Body of pancreas (tissue), 4 donors: ENCODE measurements at regions of chrX and their contacts with region 1.

Region 1: GRCh38 chrX:120090208-120090607 is 12.7 kb upstream of the RHOXF2B start:
- DNase-seq: no peak
- ATAC-seq: no peak
- H3K4me3 ChIP-seq: no peak overlapping the region
- H3K27ac ChIP-seq: no peak overlapping the region
- H3K4me1 ChIP-seq: no peaks in the 10 kb centered on the region
- H3K27me3 ChIP-seq: no peaks in the 10 kb centered on the region
- CTCF ChIP-seq: no peak
- POLR2A ChIP-seq: no peak

Region 2: GRCh38 chrX:119520266-119520665 is 569.9 kb before region 1 on chrX:
- intact Hi-C with region 1: no loop called
- DNase-seq: no peak
- ATAC-seq: no peak
- H3K4me3 ChIP-seq: no peak overlapping the region
- H3K27ac ChIP-seq: no peak overlapping the region
- H3K4me1 ChIP-seq: no peaks in the 10 kb centered on the region
- H3K27me3 ChIP-seq: no peaks in the 10 kb centered on the region
- CTCF ChIP-seq: no peak
- POLR2A ChIP-seq: no peak

Region 3: DNA sequence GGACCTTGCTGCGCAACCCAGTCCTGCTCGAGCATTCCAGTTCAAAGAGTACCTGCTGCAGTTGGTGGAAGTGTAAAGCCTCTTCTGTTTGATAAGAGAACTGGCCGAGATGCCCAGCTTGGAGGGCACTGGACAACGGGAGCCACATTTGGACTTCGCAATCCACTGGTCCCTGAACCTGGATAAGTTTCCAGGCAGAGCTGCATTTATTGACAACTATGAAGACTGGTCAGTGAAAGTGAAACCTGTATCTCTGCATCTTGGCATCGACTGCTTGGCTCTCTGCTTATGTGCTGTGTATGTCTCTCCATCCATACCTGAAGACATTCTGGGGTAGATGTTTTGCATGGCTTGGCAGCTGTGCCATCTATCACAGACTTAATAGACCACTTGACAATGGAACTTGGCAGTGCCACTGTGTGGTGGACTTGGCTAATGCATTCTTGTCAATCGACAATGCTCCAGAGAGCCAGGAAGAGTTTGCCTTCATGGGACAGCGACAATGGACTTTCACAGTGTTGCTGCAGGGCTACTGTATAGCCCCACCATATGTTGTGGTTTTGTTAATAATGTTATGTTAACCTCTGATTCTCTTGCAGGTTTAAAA is 116.9 kb after region 1 on chrX:
- intact Hi-C with region 1: loop called (anchors 10 kb)
- DNase-seq: no peak
- ATAC-seq: no peak
- H3K4me3 ChIP-seq: no peak overlapping the region
- H3K27ac ChIP-seq: no peak overlapping the region
- H3K4me1 ChIP-seq: no peaks in the 10 kb centered on the region
- H3K27me3 ChIP-seq: no peaks in the 10 kb centered on the region
- CTCF ChIP-seq: no peak
- POLR2A ChIP-seq: no peak